ENCODE measurements at regions of chr10 and their contacts with region 1.

Region 1: GRCh38 chr10:99620713-99621453 is 644 bp upstream of the SLC25A28 start:
- DNase-seq: peak; percentile 85 to 97
- H3K4me3 ChIP-seq: peak overlapping the region; percentile 61 to 70
- H3K27ac ChIP-seq: peak overlapping the region; percentile 97 to 99
- H3K4me1 ChIP-seq: peaks cover 2 to 27% of the 10 kb centered on the region in 2 donors
- H3K27me3 ChIP-seq: no peaks in the 10 kb centered on the region
- CTCF ChIP-seq: no peak

Region 2: DNA sequence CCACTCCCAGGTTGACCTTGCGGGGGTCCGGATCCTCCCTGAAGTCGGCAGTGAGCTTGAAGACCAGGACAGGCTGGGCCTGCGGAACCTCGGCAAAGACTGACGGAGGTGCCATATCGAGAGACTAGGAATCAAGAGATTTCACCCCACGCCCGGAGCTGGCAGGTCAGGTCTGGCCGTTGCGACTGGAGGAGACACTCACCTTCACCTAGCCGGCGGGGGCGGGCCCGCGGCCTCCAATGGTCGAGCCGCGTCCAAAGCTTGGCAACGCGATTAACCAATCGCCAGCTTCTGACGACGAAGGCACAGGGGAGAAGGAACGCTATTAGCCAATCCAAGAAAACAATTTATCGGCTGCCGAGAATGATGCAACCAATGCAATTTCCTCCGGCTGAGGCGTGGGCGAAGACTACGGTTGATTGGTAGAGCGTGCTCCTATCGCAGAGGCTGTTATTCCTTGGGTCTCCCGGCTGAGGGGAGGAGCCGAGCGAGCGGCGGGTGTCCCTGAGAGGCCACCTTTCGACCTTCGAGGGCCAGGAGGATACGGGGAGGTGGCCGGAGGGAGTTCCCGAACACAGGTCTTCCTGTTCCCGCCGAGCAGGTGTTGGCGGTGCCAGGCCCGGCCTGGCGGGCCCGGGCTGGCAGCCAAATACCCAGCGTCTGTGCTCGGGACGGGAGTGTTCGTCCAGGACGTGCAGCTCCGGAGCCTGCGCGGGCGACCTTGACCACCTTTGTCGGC is 190.3 kb before region 1 on chr10 and contains the start of gene GOT1:
- intact Hi-C with region 1: loop called (anchors 1 kb)
- DNase-seq: peak; percentile 92 to 98
- H3K4me3 ChIP-seq: peak within 1 kb of the TSS; percentile 72 to 96
- H3K27ac ChIP-seq: peak within 1 kb of the TSS; percentile 74 to 77
- H3K4me1 ChIP-seq: peaks cover 7 to 10% of the 10 kb centered on the region in 2 donors
- H3K27me3 ChIP-seq: no peaks in the 10 kb centered on the region
- CTCF ChIP-seq: no peak
- total RNA-seq, gene GOT1: 4.4 TPM

Region 3: DNA sequence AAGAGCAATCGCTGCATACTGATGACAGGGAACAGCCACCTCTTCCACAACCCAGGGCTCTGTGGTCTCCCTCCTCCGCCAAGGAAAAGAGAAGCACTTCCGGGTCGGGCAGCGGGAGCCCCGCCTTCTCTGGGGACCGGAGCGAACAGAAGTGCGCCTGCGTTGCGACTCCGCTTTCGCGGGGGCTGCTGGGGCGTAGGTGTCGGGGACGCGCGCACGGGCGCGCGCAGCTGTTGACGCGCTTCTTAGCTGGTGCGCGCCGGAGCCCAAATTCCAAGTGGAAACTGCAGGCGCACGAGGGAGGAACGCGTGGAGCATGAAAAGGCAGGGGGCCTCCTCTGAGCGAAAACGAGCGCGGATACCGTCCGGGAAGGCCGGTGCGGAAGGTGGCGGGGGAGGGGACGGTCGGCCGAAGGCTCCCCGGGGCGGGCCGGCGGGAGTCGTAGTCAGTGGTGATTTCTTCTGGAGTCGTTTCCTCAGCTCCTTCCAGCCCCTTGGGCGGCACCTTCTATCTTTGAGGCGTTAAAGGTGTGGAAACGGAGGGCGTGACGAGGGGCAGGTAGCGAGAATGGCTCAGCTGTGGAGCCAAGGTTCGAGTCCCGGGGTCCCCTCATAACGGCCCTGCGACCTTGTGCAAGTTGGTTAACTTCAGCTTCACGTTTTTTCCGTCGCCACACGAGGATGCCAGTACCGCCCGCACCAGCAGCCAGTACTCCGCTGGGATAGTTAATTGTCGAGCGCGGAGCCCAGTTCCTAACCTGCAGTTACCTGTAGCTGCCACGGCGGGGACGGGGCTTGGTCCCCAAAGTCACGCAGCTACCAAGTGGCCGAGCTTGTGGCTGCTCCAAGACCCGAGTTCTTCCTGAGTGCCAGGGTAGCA is 111.4 kb after region 1 on chr10 and contains the starts of genes COX15 and CUTC:
- intact Hi-C with region 1: loop called (anchors 2 kb)
- DNase-seq: peak; percentile 87 to 98
- H3K4me3 ChIP-seq: peak within 1 kb of the TSS; percentile 76 to 88
- H3K27ac ChIP-seq: peak within 1 kb of the TSS; percentile 85 to 91
- H3K4me1 ChIP-seq: peaks cover 0 to 15% of the 10 kb centered on the region in 2 donors
- H3K27me3 ChIP-seq: no peaks in the 10 kb centered on the region
- CTCF ChIP-seq: peak in 1 of 3 experiments; percentile 23
- total RNA-seq, gene COX15: 22.0 TPM
- total RNA-seq, gene CUTC: 8.0 TPM

Region 4: GRCh38 chr10:100286051-100287033 is 665.5 kb after region 1 on chr10 and contains the start of gene BLOC1S2:
- intact Hi-C with region 1: loop called (anchors 2 kb)
- DNase-seq: peak; percentile 58 to 92
- H3K4me3 ChIP-seq: peak within 1 kb of the TSS; percentile 95 to 97
- H3K27ac ChIP-seq: peak within 1 kb of the TSS; percentile 97 to 99
- H3K4me1 ChIP-seq: peaks cover 0 to 21% of the 10 kb centered on the region in 2 donors
- H3K27me3 ChIP-seq: no peaks in the 10 kb centered on the region
- CTCF ChIP-seq: peak in 1 of 3 experiments; percentile 12
- total RNA-seq, gene BLOC1S2: 21.4 TPM

Measured in ascending aorta (tissue), 2 donors.